ENCODE measurements at regions of chr17 and their contacts with region 1.

Region 1: GRCh38 chr17:7834962-7835813 is 1.2 kb downstream of the KDM6B start:
- DNase-seq: peak; percentile 92
- CTCF ChIP-seq: peak; percentile 95

Region 2: DNA sequence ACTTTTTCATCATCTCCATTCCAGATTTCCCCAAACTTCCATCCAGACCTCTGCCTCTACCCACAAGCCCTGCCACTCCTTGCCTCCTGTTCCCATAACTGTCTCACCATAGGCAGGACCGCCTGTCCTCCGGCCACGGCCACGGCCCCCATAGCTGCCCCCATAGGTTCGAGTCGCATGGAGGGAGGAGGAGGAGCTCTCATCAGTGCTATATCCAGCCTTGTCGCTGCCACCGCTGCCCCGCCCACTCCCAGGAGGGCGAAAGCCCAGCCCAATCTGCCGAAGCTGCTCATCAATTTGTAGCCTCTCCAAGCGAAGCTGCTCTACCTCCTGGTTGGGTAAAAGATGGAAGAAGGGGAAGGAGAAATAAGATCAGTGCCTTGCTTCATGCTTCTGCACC is 241.9 kb before region 1 on chr17:
- CTCF ChIA-PET with region 1: no interaction called
- POLR2A ChIA-PET with region 1: no interaction called
- DNase-seq: no peak
- CTCF ChIP-seq: no peak

Region 3: GRCh38 chr17:7818746-7819645 is 16.2 kb before region 1 on chr17:
- CTCF ChIA-PET with region 1: interaction called, 26 read pairs
- POLR2A ChIA-PET with region 1: no interaction called
- DNase-seq: no peak
- CTCF ChIP-seq: no peak

Region 4: DNA sequence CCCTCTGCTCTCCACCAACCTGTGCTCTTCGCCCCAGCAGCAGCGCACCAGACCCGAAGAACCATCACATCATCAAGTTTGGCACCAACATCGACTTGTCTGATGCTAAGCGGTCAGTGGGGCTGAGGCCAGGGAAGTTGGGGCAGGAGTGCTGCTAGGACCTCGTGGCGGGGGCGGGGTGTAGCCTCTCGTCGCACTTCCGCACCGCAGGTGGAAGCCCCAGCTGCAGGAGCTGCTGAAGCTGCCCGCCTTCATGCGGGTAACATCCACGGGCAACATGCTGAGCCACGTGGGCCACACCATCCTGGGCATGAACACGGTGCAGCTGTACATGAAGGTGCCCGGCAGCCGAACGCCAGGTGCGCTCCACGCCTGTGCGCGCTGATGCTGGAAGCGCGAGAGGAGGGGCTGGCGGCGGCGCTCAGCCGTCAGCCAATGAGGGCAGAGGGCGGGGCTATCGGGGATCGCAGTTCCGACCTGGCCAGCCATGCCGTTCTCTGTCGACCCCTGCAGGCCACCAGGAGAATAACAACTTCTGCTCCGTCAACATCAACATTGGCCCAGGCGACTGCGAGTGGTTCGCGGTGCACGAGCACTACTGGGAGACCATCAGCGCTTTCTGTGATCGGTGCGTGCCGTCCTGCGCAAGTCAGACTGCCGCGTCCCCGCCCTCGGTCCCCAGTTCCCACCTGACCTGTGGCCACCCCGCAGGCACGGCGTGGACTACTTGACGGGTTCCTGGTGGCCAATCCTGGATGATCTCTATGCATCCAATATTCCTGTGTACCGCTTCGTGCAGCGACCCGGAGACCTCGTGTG is 16.5 kb after region 1 on chr17:
- CTCF ChIA-PET with region 1: interaction called, 29 read pairs
- POLR2A ChIA-PET with region 1: interaction called, 3 read pairs
- DNase-seq: peak; percentile 91
- CTCF ChIP-seq: peak; percentile 92

Measured in GM10248 (cell line).